Naive thymus-derived CD8-positive, alpha-beta T cell (primary cell): ENCODE measurements at regions of chr1 and their contacts with region 1.

Region 1: DNA sequence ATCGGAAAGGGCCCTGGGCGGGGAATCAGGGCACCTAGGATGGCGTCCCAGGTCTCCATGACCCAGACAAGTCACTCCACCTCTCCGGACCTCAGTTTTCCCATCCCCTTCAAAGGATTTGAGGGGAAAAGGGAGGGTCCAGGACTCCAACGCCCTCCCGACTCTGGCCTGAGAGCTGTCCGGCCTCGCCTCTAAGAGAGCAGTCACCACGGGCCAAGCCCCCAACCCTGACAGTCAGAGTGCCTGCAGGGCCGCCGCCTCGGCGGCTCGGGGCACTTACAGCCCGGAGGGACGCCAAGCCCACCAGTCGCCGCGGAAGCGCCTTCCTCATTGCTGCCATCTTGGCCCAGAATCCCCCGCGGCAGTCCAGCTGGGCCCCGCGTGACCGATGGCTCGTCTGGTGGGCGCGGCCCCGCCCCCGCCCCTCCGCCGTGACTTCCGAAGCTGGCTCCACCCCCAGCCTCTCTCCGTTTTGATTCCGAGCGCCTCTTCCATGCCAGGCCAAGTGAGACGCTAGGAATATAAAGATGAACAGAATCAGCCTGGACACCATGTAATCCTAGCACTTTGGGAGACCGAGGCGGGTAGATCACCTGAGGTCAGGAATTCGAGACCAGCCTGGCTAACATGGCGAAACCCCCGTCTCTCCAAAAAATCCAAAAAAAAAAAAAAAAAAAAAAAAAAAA is at the start of gene HMGCL:
- DNase-seq: peak; percentile 81 to 93 (median 85)
- ATAC-seq: peak; percentile 97
- H3K4me3 Mint-ChIP-seq: peak within 1 kb of the TSS; percentile 90 to 97 (median 94)
- H3K27ac Mint-ChIP-seq: peak within 1 kb of the TSS; percentile 93 to 98 (median 96)
- H3K4me1 Mint-ChIP-seq: peaks cover 19 to 29% (median 25%) of the 10 kb centered on the region in 4 donors
- H3K27me3 Mint-ChIP-seq: no peaks in the 10 kb centered on the region
- polyA plus RNA-seq, gene HMGCL: 25.9 to 37.9 (median 34.3) TPM

Region 2: DNA sequence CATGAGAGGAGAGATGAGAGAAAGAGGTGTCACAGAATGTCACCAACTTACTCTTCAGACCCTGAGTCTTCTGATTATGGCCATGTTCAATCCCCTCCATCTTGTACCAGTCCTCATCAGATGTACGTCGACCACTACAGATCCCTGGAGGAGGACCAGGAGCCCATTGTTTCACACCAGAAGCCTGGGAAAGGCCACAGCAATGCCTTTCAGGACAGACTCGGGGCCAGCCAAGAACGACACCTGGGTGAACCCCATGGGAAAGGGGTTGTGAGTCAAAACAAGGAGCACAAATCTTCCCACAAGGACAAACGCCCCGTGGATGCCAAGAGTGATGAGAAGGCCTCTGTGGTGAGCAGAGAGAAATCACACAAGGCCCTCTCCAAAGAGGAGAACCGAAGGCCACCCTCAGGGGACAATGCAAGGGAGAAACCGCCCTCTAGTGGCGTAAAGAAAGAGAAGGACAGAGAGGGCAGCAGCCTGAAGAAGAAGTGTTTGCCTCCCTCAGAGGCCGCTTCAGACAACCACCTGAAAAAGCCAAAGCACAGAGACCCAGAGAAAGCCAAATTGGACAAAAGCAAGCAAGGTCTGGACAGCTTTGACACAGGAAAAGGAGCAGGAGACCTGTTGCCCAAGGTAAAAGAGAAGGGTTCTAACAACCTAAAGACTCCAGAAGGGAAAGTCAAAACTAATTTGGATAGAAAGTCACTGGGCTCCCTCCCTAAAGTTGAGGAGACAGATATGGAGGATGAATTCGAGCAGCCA is 74.0 kb before region 1 on chr1:
- POLR2A ChIA-PET with region 1: no interaction called
- DNase-seq: peak in 8 of 10 donors; percentile 8 to 69 (median 20)
- ATAC-seq: peak; percentile 44 to 65
- H3K4me3 Mint-ChIP-seq: no peak overlapping the region
- H3K27ac Mint-ChIP-seq: peak overlapping the region in 5 of 10 donors; percentile 47 to 91 (median 78)
- H3K4me1 Mint-ChIP-seq: peaks cover 27 to 35% (median 32%) of the 10 kb centered on the region in 4 donors
- H3K27me3 Mint-ChIP-seq: no peaks in the 10 kb centered on the region

Region 3: GRCh38 chr1:23800400-23801337 is 24.6 kb before region 1 on chr1 and contains the start of gene GALE:
- POLR2A ChIA-PET with region 1: interaction called, 29 read pairs
- DNase-seq: peak; percentile 91 to 98 (median 95)
- ATAC-seq: peak; percentile 88 to 89
- H3K4me3 Mint-ChIP-seq: peak within 1 kb of the TSS; percentile 75 to 97 (median 90)
- H3K27ac Mint-ChIP-seq: peak within 1 kb of the TSS; percentile 81 to 95 (median 92)
- H3K4me1 Mint-ChIP-seq: peaks cover 6 to 22% (median 16%) of the 10 kb centered on the region in 4 donors
- H3K27me3 Mint-ChIP-seq: peaks cover 0 to 1% (median 0%) of the 10 kb centered on the region in 5 donors
- polyA plus RNA-seq, gene GALE: 8.0 to 12.7 (median 12.3) TPM

Region 4: GRCh38 chr1:23809751-23810171 is 15.5 kb before region 1 on chr1:
- POLR2A ChIA-PET with region 1: interaction called, 16 read pairs
- DNase-seq: peak; percentile 75 to 89 (median 81)
- ATAC-seq: peak; percentile 97 to 98
- H3K4me3 Mint-ChIP-seq: peak overlapping the region in 1 of 10 donors; percentile 2
- H3K27ac Mint-ChIP-seq: peak overlapping the region in 6 of 10 donors; percentile 15 to 67 (median 47)
- H3K4me1 Mint-ChIP-seq: peaks cover 12 to 26% (median 18%) of the 10 kb centered on the region in 4 donors
- H3K27me3 Mint-ChIP-seq: no peaks in the 10 kb centered on the region

Region 5: DNA sequence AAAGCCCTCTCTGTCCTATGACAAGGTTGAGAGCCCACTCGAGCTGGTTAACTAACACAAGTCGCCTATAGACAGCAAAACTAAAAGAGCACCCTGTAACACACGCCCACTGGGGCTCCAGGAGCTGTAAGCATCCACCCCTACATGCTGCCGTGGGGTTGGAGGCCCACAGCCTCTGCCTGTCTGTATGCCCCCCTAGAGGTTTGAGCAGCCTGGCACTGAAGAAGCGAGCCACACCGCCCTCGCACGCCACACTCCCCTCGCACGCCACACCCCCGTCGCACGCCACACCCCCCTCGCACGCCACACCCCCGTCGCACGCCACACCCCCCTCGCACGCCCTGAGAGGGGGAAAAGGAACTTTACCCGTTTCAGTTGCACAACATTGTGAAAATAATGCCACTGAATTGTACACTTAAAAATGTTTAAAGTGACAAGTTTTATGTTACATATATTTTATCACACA is 13.2 kb after region 1 on chr1:
- POLR2A ChIA-PET with region 1: interaction called, 16 read pairs
- DNase-seq: peak; percentile 75 to 91 (median 82)
- ATAC-seq: peak; percentile 100
- H3K4me3 Mint-ChIP-seq: peak overlapping the region; percentile 69 to 88 (median 80)
- H3K27ac Mint-ChIP-seq: peak overlapping the region in 9 of 10 donors; percentile 18 to 82 (median 72)
- H3K4me1 Mint-ChIP-seq: peaks cover 6 to 13% (median 11%) of the 10 kb centered on the region in 4 donors
- H3K27me3 Mint-ChIP-seq: peaks cover 0 to 2% (median 0%) of the 10 kb centered on the region in 5 donors

Region 6: GRCh38 chr1:23867953-23868556 is 42.8 kb after region 1 on chr1 and contains the start of gene FUCA1:
- POLR2A ChIA-PET with region 1: interaction called, 10 read pairs
- DNase-seq: peak; percentile 93 to 97 (median 96)
- ATAC-seq: peak; percentile 98 to 99
- H3K4me3 Mint-ChIP-seq: peak within 1 kb of the TSS; percentile 79 to 93 (median 86)
- H3K27ac Mint-ChIP-seq: peak within 1 kb of the TSS; percentile 85 to 97 (median 92)
- H3K4me1 Mint-ChIP-seq: peaks cover 13 to 40% (median 31%) of the 10 kb centered on the region in 4 donors
- H3K27me3 Mint-ChIP-seq: no peaks in the 10 kb centered on the region
- polyA plus RNA-seq, gene FUCA1: 8.1 to 13.8 (median 10.7) TPM

Region 7: GRCh38 chr1:23959041-23959460 is 133.8 kb after region 1 on chr1:
- POLR2A ChIA-PET with region 1: interaction called, 11 read pairs
- DNase-seq: peak; percentile 75 to 96 (median 92)
- ATAC-seq: peak; percentile 80 to 86
- H3K4me3 Mint-ChIP-seq: peak overlapping the region; percentile 95 to 100 (median 100)
- H3K27ac Mint-ChIP-seq: peak overlapping the region; percentile 99 to 100 (median 100)
- H3K4me1 Mint-ChIP-seq: peaks cover 13 to 79% (median 47%) of the 10 kb centered on the region in 4 donors
- H3K27me3 Mint-ChIP-seq: no peaks in the 10 kb centered on the region